Colonic mucosa (tissue), 4 donors: ENCODE measurements at regions of chr7 and their contacts with region 1.

Region 1: DNA sequence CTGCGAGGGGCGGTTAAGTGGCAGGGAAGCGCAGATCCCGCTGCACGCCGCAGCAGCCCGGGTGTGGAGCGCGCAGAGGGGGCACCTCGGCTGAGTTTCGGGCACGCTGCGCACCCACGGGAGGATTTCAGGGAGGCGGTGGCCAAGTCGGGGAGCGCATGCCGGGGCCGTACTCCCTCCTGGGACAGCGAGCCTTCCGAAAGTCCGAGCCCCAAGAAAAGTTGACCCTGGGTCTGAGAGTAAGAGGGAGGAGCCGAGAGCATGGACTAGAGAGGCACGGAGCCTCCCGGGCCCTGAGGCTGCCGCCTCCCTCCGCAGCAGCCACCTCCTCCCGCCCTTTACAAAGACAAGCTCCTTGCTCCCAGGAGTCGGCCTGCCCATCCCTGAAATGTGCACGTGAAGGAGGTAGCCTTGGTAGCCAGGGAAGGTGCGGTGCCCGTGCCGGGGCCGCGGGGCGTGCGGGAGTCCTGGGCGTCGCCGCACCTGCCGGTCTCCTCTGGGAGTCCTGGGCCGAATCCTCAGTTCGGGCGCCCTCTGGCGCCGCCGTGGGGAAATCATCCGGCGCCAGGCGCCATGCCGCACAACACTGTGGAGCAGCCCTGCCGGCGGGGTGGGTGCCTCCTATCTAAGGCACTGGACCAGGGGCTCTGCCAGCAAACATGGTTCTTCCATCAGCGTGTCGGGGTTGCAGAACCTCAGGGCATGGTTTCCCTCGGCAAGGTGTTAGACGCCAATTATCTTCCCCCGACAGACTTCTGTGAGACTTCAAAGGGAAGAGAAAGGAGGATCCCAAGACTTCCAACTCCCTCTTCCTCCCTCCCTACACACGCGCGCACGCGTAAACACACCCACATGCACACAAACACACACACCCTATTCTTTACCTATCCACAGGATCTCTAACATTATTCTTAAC is 104.0 kb downstream of the TRIL start:
- DNase-seq: peak; percentile 84
- H3K4me3 ChIP-seq: peak overlapping the region; percentile 33
- H3K27ac ChIP-seq: no peak overlapping the region
- H3K4me1 ChIP-seq: no peaks in the 10 kb centered on the region
- H3K27me3 ChIP-seq: peaks cover 8% of the 10 kb centered on the region
- CTCF ChIP-seq: peak; percentile 86

Region 2: GRCh38 chr7:28389504-28390395 is 464.3 kb before region 1 on chr7:
- intact Hi-C with region 1: loop called (anchors 5 kb)
- DNase-seq: no peak
- H3K4me3 ChIP-seq: no peak overlapping the region
- H3K27ac ChIP-seq: no peak overlapping the region
- H3K4me1 ChIP-seq: no peaks in the 10 kb centered on the region
- H3K27me3 ChIP-seq: no peaks in the 10 kb centered on the region
- CTCF ChIP-seq: peak; percentile 64

Region 3: DNA sequence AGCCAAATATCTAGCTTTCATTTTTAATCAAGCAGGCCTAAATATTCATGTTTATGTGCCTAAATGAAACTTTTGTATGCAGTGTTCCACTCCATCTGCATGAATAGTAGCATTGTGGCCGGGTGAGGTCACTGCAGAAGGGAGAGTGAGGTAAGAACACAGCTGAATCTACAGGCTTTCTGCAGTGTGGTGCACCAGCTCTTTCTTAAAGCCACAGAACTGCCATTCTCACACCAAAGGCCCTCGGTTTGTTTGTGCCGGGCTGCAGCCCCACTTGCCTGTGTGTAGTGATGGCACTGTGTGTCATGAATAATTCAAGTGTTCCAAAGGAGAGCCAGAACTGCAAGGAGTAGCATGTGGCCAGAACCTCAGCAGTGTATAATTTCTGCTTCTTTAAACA is 100.1 kb before region 1 on chr7:
- intact Hi-C with region 1: loop called (anchors 10 kb)
- DNase-seq: no peak
- H3K4me3 ChIP-seq: no peak overlapping the region
- H3K27ac ChIP-seq: no peak overlapping the region
- H3K4me1 ChIP-seq: no peaks in the 10 kb centered on the region
- H3K27me3 ChIP-seq: no peaks in the 10 kb centered on the region
- CTCF ChIP-seq: no peak